Esophagus muscularis mucosa (tissue), 4 donors: ENCODE measurements at regions of chr16 and their contacts with region 1.

Region 1: GRCh38 chr16:58020628-58021139 is 4.9 kb upstream of the MMP15 start:
- DNase-seq: no peak
- H3K4me3 ChIP-seq: no peak overlapping the region
- H3K27ac ChIP-seq: no peak overlapping the region
- H3K4me1 ChIP-seq: peaks cover 32 to 49% (median 44%) of the 10 kb centered on the region in 4 donors
- H3K27me3 ChIP-seq: no peaks in the 10 kb centered on the region
- CTCF ChIP-seq: peak; percentile 66 to 88 (median 82)
- EP300 ChIP-seq: no peak
- POLR2A ChIP-seq: no peak

Region 2: DNA sequence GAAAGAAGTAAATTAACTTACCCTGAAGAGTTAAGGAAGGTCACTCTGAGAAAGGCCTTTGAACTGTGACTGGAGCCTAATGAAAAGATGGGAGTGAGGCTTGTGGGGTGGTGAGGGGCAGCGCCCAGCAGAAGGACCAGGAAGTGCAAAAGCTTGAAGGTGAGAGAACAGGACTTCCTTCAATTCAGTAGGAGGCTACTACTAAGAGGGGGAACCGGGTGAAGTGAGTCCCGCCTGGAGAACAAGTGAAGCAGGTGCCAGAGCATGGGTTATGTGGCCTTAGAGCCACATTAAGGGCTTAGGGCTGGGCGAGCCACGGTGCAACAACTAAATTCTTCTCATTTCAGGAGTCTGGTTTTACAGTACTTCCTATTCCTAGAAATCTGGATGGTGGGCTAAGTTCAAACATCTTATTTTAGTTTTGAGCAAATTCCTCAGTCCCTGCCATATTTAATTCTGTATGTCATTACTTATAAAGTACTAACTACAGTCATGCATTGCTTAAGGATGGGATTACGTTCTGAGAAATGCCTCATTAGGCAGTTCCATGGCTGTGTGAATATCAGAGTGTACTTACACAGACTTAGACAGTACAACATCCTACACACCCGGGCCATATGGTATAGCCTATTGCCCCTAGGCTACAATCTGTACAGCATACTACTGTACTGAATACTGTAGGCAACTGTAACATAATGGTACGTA is 103.4 kb after region 1 on chr16:
- intact Hi-C with region 1: loop called (anchors 2 kb)
- DNase-seq: no peak
- H3K4me3 ChIP-seq: no peak overlapping the region
- H3K27ac ChIP-seq: peak overlapping the region; percentile 30 to 50 (median 40)
- H3K4me1 ChIP-seq: peaks cover 77 to 97% (median 91%) of the 10 kb centered on the region in 4 donors
- H3K27me3 ChIP-seq: no peaks in the 10 kb centered on the region
- CTCF ChIP-seq: no peak
- EP300 ChIP-seq: no peak
- POLR2A ChIP-seq: no peak

Region 3: GRCh38 chr16:58198022-58198683 is 177.5 kb after region 1 on chr16 and contains the start of gene CSNK2A2:
- intact Hi-C with region 1: loop called (anchors 5 kb)
- DNase-seq: no peak
- H3K4me3 ChIP-seq: peak within 1 kb of the TSS; percentile 66 to 95 (median 80)
- H3K27ac ChIP-seq: peak within 1 kb of the TSS; percentile 57 to 72 (median 62)
- H3K4me1 ChIP-seq: peaks cover 23 to 39% (median 30%) of the 10 kb centered on the region in 4 donors
- H3K27me3 ChIP-seq: peaks cover 0 to 9% (median 0%) of the 10 kb centered on the region in 4 donors
- CTCF ChIP-seq: peak; percentile 28 to 53 (median 53)
- EP300 ChIP-seq: no peak
- POLR2A ChIP-seq: no peak
- total RNA-seq, gene CSNK2A2: 37.1 to 56.5 (median 42.7) TPM

Region 4: GRCh38 chr16:58487566-58488351 is 467.1 kb after region 1 on chr16:
- intact Hi-C with region 1: loop called (anchors 5 kb)
- DNase-seq: no peak
- H3K4me3 ChIP-seq: peak overlapping the region; percentile 31 to 45 (median 36)
- H3K27ac ChIP-seq: no peak overlapping the region
- H3K4me1 ChIP-seq: peaks cover 10 to 32% (median 14%) of the 10 kb centered on the region in 4 donors
- H3K27me3 ChIP-seq: no peaks in the 10 kb centered on the region
- CTCF ChIP-seq: peak in 2 of 3 experiments; percentile 85 to 93
- EP300 ChIP-seq: no peak
- POLR2A ChIP-seq: no peak